ENCODE measurements at regions of chr15 and their contacts with region 1.

Region 1: GRCh38 chr15:42723054-42723453 is 13.9 kb downstream of the CDAN1 start:
- DNase-seq: no peak
- H3K4me3 ChIP-seq: no peak overlapping the region
- H3K27ac ChIP-seq: peak overlapping the region in 1 of 2 donors; percentile 70
- H3K4me1 ChIP-seq: peaks cover 0 to 11% of the 10 kb centered on the region in 2 donors
- H3K27me3 ChIP-seq: no peaks in the 10 kb centered on the region
- CTCF ChIP-seq: no peak

Region 2: GRCh38 chr15:42929306-42929848 is 206.3 kb after region 1 on chr15:
- intact Hi-C with region 1: loop called (anchors 5 kb)
- DNase-seq: no peak
- H3K4me3 ChIP-seq: no peak overlapping the region
- H3K27ac ChIP-seq: peak overlapping the region; percentile 55 to 65
- H3K4me1 ChIP-seq: peaks cover 0 to 14% of the 10 kb centered on the region in 2 donors
- H3K27me3 ChIP-seq: no peaks in the 10 kb centered on the region
- CTCF ChIP-seq: no peak

Measured in ascending aorta (tissue), 2 donors.